Prostate gland (tissue), 2 donors: ENCODE measurements at regions of chr22 and their contacts with region 1.

Region 1: DNA sequence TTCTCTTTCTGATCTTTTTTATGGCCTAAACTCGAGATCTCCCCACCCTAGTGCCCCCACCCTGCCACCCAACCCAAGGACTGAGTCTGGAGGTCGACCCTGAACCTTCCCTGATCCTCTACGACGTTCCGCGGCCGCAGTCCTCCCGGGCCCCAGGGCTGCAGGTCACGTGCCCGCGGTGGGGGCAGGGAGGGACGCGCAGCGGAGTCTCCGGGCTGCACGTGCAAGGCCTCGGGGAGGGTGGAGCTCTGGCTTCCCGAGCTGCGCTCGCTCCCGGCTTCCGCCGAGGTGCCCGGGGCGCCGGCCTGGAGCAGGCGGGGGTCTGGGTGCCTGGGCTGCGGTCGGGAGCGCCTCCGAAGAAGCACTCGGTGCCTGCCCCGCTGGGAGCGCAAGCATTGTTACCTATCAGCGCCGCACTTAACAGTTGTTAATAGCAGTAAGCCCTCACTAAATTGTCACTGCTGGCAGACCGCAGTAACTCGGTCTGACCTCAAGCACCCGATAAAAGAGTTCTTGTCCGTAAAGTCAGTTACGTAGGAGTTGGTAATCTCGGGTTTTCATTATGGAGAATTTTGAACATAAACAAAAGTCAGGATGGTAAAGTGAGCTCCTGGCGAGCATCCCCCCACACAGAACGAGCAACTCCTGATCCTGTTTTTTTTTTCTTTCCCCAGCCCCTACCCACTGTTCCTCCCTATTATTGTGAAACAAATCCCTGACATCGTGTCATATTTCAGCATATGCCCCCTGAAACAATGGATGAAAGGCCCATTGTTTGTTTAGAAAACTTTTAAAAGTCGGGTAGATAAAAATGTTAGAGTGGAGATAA is 69.7 kb upstream of the EP300 start:
- DNase-seq: peak; percentile 92
- H3K4me3 ChIP-seq: peak overlapping the region; percentile 74 to 77
- H3K27ac ChIP-seq: peak overlapping the region; percentile 98 to 99
- H3K4me1 ChIP-seq: no peaks in the 10 kb centered on the region
- H3K27me3 ChIP-seq: no peaks in the 10 kb centered on the region
- CTCF ChIP-seq: no peak
- POLR2A ChIP-seq: peak; percentile 52

Region 2: GRCh38 chr22:40950962-40951794 is 71.5 kb before region 1 on chr22 and contains the start of gene RBX1:
- intact Hi-C with region 1: loop called (anchors 1 kb)
- DNase-seq: peak; percentile 98
- H3K4me3 ChIP-seq: peak within 1 kb of the TSS; percentile 73 to 80
- H3K27ac ChIP-seq: peak within 1 kb of the TSS; percentile 91 to 95
- H3K4me1 ChIP-seq: peaks cover 5% of the 10 kb centered on the region
- H3K27me3 ChIP-seq: no peaks in the 10 kb centered on the region
- CTCF ChIP-seq: no peak
- POLR2A ChIP-seq: peak; percentile 91
- total RNA-seq, gene RBX1: 34.9 to 42.8 TPM